ENCODE measurements at regions of chr4 and their contacts with region 1.

Region 1: DNA sequence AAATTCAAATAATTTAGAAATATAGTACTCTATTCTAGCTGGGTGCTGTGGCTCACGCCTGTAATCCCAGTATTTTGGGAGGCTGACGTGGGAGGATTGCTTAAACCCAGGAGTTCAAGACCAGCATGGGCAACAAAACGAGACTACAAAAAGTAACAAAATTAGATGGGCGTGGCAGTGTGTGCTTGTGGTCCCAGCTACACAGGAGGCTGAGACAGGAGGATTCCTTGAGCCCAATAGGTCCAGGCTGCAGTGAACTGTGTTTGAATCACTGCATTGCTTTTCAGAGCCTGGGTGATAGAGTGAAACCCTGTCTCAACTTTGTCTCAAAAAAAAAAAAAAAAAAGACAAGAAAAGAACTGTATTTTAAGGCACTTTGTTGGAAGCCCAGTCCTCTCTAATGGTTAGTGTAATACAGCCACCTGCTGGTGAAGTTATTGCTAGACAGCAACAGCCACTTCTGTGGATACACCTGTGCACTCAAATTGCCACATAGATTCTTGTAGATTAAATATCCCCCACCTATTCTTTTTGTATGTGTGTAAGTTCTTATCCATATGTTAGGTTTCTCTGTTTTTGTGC is 10.1 kb upstream of the FGG start:
- DNase-seq: peak; percentile 24
- H3K4me3 ChIP-seq: no peak overlapping the region
- H3K27ac ChIP-seq: no peak overlapping the region
- H3K4me1 ChIP-seq: peaks cover 3% of the 10 kb centered on the region
- H3K27me3 ChIP-seq: no peaks in the 10 kb centered on the region
- CTCF ChIP-seq: peak; percentile 44

Region 2: GRCh38 chr4:154529728-154530519 is 92.6 kb before region 1 on chr4:
- intact Hi-C with region 1: no loop called
- DNase-seq: no peak
- H3K4me3 ChIP-seq: no peak overlapping the region
- H3K27ac ChIP-seq: no peak overlapping the region
- H3K4me1 ChIP-seq: no peaks in the 10 kb centered on the region
- H3K27me3 ChIP-seq: no peaks in the 10 kb centered on the region
- CTCF ChIP-seq: no peak

Region 3: GRCh38 chr4:154559494-154560418 is 62.8 kb before region 1 on chr4:
- intact Hi-C with region 1: loop called (anchors 2 kb)
- DNase-seq: peak; percentile 22
- H3K4me3 ChIP-seq: no peak overlapping the region
- H3K27ac ChIP-seq: no peak overlapping the region
- H3K4me1 ChIP-seq: no peaks in the 10 kb centered on the region
- H3K27me3 ChIP-seq: no peaks in the 10 kb centered on the region
- CTCF ChIP-seq: peak; percentile 36